Activated T-helper 2 cell treated with anti-CD3 and anti-CD28 coated beads, Interferon-gamma antibody, Interleukin-2, Interleukin-4, amounts not matched to agents 10 μg/mL and 5 μg/mL and 100 μg/mL, durations not matched to agents 14 hours and 24 hours and 36 hours (primary cell): ENCODE measurements at regions of chr2 and their contacts with region 1.

Region 1: GRCh38 chr2:200713003-200713703 is 98.6 kb upstream of the BZW1 start:
- DNase-seq: peak; percentile 89
- H3K4me3 Mint-ChIP-seq: peak overlapping the region; percentile 69
- H3K27ac Mint-ChIP-seq: peak overlapping the region; percentile 99
- H3K4me1 Mint-ChIP-seq: peaks cover 38% of the 10 kb centered on the region
- H3K27me3 Mint-ChIP-seq: no peaks in the 10 kb centered on the region

Region 2: DNA sequence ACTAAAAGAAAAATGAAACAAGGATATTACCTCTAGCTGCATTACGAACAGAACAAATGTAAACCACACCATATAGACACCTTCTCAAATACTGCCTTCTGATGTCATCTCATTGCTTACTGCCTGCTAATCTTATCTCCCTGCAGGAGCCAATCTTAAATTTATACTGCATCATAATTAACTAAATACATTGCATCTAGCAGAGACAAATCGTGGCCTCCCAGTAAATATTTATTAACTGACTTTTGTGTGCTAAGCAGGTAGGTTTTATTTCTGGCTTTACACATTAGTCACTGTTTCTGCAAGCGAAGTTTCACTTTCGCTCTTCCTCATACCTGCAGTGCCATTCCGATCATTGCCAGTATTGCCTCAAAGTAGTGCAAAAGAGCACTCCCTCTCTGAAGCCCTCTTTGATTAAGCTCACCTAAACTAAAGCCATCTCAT is 339.2 kb before region 1 on chr2:
- intact Hi-C with region 1: loop called (anchors 5 kb)
- DNase-seq: peak; percentile 33
- H3K4me3 Mint-ChIP-seq: peak overlapping the region; percentile 76
- H3K27ac Mint-ChIP-seq: peak overlapping the region; percentile 74
- H3K4me1 Mint-ChIP-seq: peaks cover 51% of the 10 kb centered on the region
- H3K27me3 Mint-ChIP-seq: no peaks in the 10 kb centered on the region

Region 3: DNA sequence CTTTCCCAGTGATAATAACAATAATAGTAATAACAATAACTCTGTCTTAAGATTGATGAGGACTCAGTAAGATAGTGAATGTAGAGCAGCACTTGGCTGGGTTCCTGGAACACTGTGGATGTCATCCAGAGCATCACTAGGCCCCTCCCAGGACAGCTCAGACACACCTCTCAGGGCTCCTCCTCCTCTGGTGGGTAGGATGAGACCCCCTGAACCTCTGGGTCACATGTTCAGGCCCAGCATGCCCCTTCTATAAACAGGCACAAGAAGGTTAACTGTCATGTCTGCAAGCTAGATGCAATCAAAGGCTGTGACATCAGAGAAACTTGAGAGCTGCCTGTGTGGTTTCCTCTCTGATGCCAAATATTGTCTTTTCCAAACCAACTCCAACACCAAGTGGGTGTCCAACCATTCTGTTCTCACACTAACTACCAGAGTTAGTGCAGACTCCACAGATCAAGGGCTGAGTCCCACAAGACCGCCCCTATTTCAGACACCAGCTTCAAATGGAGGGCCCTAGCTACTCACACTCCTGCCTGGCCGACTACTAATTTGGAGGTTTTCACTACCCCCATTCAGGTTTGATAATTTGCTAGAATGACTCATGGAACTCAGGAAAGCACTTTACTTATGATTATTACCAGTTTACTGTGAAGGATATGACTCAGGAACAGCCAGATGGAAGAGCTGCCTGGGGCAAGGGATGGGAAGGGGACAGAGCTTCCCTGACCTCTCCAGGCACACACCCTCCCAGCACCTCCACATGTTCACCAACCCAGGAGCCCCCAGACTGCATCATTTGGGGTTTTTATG is 52.2 kb after region 1 on chr2:
- intact Hi-C with region 1: loop called (anchors 1 kb)
- DNase-seq: peak; percentile 21
- H3K4me3 Mint-ChIP-seq: peak overlapping the region; percentile 41
- H3K27ac Mint-ChIP-seq: peak overlapping the region; percentile 90
- H3K4me1 Mint-ChIP-seq: peaks cover 35% of the 10 kb centered on the region
- H3K27me3 Mint-ChIP-seq: no peaks in the 10 kb centered on the region

Region 4: DNA sequence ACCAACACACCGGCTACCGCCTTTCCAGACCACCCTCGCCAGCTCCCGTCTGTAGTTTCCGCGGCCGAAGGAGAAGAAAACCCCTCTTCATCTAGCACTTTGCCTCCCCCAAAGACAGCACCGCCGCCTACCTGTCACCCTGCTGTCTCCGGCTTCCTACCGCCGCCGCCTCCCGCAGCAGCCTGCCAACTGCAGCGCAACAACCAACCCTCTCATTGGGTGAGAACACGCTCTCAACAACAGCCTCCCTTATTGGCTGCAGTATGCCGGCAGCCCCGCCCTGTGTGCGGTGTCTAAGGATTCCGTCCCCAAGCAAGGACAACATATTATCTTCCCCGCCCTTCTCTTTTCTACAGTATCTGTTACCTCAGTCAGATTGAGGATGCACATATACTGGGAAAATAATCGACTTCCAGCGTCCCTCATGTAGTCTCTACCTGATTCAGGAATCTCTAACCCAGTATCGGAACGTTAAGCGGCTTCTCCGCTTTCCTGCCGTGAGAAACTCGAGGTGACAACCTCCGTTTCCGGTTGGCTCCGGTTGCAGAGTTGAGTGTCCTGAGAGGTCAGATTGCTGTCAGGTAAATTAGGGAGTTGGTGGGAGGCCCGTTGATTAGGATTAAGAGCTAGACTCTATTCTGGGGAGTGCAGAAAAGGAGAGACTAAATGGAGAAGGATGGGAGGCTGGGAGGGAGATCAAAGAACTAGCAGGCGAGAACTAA is 358.5 kb after region 1 on chr2 and contains the starts of genes HYCC2 and NDUFB3:
- intact Hi-C with region 1: loop called (anchors 2 kb)
- DNase-seq: peak; percentile 92
- H3K4me3 Mint-ChIP-seq: peak within 1 kb of the TSS; percentile 93
- H3K27ac Mint-ChIP-seq: peak within 1 kb of the TSS; percentile 93
- H3K4me1 Mint-ChIP-seq: peaks cover 37% of the 10 kb centered on the region
- H3K27me3 Mint-ChIP-seq: no peaks in the 10 kb centered on the region
- total RNA-seq, gene HYCC2: 20.1 and 23.8 TPM in 2 replicates
- total RNA-seq, gene NDUFB3: 123 and 125 TPM in 2 replicates

Region 5: GRCh38 chr2:201130524-201131186 is 417.5 kb after region 1 on chr2:
- intact Hi-C with region 1: loop called (anchors 2 kb)
- DNase-seq: no peak
- H3K4me3 Mint-ChIP-seq: peak overlapping the region; percentile 90
- H3K27ac Mint-ChIP-seq: peak overlapping the region; percentile 92
- H3K4me1 Mint-ChIP-seq: peaks cover 50% of the 10 kb centered on the region
- H3K27me3 Mint-ChIP-seq: no peaks in the 10 kb centered on the region